ENCODE measurements at regions of chr7 and their contacts with region 1.

Region 1: GRCh38 chr7:103727982-103728610 is 261.4 kb downstream of the RELN start:
- DNase-seq: no peak
- H3K4me3 ChIP-seq: no peak overlapping the region
- H3K27ac ChIP-seq: no peak overlapping the region
- H3K4me1 ChIP-seq: no peaks in the 10 kb centered on the region
- H3K27me3 ChIP-seq: no peaks in the 10 kb centered on the region
- CTCF ChIP-seq: no peak

Region 2: GRCh38 chr7:103637094-103637493 is 91.0 kb before region 1 on chr7:
- intact Hi-C with region 1: no loop called
- DNase-seq: no peak
- H3K4me3 ChIP-seq: no peak overlapping the region
- H3K27ac ChIP-seq: no peak overlapping the region
- H3K4me1 ChIP-seq: no peaks in the 10 kb centered on the region
- H3K27me3 ChIP-seq: no peaks in the 10 kb centered on the region
- CTCF ChIP-seq: no peak

Region 3: DNA sequence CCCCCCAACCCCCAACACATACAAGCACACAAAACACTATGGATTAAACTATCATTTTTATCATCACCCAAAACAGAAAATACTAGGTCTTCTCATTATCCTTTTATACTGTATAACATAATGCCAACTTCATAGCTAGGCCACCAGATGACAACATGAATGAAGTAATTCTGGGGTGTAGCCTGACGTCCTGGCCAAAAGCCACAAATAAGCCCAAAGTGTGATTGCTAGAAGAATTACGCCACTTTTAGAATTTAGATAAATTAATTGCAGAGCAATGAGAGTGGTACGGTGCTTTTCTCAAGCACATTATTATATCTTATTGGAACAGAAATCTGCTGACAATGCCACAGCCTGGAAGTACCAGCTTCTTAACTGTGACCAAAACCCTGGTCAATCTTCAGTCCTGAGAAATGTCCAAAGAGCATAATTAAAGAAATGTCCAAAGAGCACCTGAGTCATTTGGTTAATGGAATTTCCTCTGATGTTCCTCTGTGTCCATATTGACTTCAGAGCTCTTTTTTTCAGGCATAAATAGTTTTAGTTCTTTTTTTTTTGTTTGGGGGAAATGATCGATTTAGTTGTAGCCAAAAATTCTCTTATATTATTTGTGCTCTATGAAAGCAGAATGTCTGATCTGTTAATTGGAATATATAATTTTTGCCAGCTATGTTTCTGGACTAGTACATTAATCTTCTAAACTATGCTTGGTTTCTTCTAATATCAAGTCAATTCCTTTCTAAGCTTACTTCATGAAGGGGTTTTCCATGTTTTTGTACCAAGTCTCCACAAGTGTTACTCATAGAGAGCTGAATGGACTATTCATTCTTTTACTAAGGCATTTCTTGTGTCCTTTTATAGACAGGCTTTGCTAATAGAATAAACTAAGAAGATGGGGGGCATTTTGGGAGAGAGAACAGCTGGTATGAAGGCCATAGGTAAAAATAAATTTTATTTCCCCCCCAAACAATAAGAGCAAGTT is 48.7 kb before region 1 on chr7:
- intact Hi-C with region 1: loop called (anchors 10 kb)
- DNase-seq: no peak
- H3K4me3 ChIP-seq: no peak overlapping the region
- H3K27ac ChIP-seq: no peak overlapping the region
- H3K4me1 ChIP-seq: no peaks in the 10 kb centered on the region
- H3K27me3 ChIP-seq: no peaks in the 10 kb centered on the region
- CTCF ChIP-seq: no peak

Measured in ascending aorta (tissue), 2 donors.